Activated B cell treated with CpG ODN at 0.5 μM for 24 hours (primary cell): ENCODE measurements at regions of chr15 and their contacts with region 1.

Region 1: GRCh38 chr15:72473614-72474465 is at the start of gene ARIH1:
- DNase-seq: peak; percentile 98
- ATAC-seq: peak; percentile 72
- H3K4me3 Mint-ChIP-seq: peak within 1 kb of the TSS; percentile 97
- H3K27ac Mint-ChIP-seq: peak within 1 kb of the TSS; percentile 99
- H3K4me1 Mint-ChIP-seq: peaks cover 39% of the 10 kb centered on the region
- H3K27me3 Mint-ChIP-seq: no peaks in the 10 kb centered on the region
- CTCF ChIP-seq: no peak
- total RNA-seq, gene ARIH1: 142 and 159 TPM in 2 replicates

Region 2: GRCh38 chr15:72199711-72200212 is 274.1 kb before region 1 on chr15:
- CTCF ChIA-PET with region 1: no interaction called
- POLR2A ChIA-PET with region 1: no interaction called
- intact Hi-C with region 1: loop called (anchors 10 kb)
- DNase-seq: peak; percentile 60
- ATAC-seq: peak; percentile 72
- H3K4me3 Mint-ChIP-seq: no peak overlapping the region
- H3K27ac Mint-ChIP-seq: no peak overlapping the region
- H3K4me1 Mint-ChIP-seq: peaks cover 27% of the 10 kb centered on the region
- H3K27me3 Mint-ChIP-seq: peaks cover 18% of the 10 kb centered on the region
- CTCF ChIP-seq: peak; percentile 56

Region 3: DNA sequence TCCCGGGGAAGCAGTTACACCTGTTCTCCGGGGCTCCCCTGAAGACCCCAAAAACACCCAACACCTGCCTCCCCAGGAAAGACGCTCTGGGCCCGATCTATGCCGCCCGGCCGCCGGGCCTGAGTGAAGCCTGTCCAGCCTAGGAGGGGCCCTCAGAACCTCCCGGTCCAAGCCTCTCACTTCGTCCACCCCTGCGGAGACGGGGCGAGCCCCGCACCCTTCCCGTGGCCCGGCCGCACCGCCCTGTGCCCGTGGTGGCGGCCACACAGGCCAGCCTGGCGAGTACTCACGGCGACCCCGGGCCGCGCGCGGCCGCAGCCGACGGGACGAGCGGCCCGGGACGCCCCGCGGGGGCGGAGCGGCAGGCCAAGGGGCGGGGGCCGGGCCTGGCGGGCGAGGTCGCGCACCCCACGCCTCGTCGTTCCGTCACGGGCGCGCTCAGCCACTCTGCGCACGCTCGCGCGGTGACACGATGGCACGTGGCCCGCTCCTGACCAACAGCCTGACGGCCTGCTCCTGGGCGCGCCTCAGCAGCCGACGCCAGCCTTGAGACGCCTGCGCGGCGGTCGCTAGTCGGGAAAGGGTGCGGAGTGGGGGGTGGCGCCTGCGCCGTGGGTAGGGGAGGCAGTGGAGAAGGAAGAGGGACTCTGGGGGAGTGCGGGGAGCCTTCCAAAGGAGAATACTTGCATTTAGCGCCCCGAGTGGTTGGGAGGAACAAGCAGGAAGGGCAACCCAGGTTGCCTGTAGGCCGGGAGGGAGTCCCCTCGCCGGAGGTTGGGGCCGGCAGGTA is 201.4 kb before region 1 on chr15 and contains the start of gene PARP6:
- CTCF ChIA-PET with region 1: no interaction called
- POLR2A ChIA-PET with region 1: no interaction called
- intact Hi-C with region 1: loop called (anchors 1 kb)
- DNase-seq: peak; percentile 95
- ATAC-seq: peak; percentile 96
- H3K4me3 Mint-ChIP-seq: peak within 1 kb of the TSS; percentile 87
- H3K27ac Mint-ChIP-seq: peak within 1 kb of the TSS; percentile 86
- H3K4me1 Mint-ChIP-seq: peaks cover 36% of the 10 kb centered on the region
- H3K27me3 Mint-ChIP-seq: no peaks in the 10 kb centered on the region
- CTCF ChIP-seq: no peak
- total RNA-seq, gene PARP6: 70.7 and 81.4 TPM in 2 replicates

Region 4: GRCh38 chr15:72319985-72320671 is 153.7 kb before region 1 on chr15 and contains the start of gene CELF6:
- CTCF ChIA-PET with region 1: no interaction called
- POLR2A ChIA-PET with region 1: no interaction called
- intact Hi-C with region 1: loop called (anchors 1 kb)
- DNase-seq: peak; percentile 77
- ATAC-seq: peak; percentile 81
- H3K4me3 Mint-ChIP-seq: peak within 1 kb of the TSS; percentile 86
- H3K27ac Mint-ChIP-seq: peak within 1 kb of the TSS; percentile 47
- H3K4me1 Mint-ChIP-seq: peaks cover 18% of the 10 kb centered on the region
- H3K27me3 Mint-ChIP-seq: no peaks in the 10 kb centered on the region
- CTCF ChIP-seq: no peak
- total RNA-seq, gene CELF6: 2.0 and 2.2 TPM in 2 replicates

Region 5: DNA sequence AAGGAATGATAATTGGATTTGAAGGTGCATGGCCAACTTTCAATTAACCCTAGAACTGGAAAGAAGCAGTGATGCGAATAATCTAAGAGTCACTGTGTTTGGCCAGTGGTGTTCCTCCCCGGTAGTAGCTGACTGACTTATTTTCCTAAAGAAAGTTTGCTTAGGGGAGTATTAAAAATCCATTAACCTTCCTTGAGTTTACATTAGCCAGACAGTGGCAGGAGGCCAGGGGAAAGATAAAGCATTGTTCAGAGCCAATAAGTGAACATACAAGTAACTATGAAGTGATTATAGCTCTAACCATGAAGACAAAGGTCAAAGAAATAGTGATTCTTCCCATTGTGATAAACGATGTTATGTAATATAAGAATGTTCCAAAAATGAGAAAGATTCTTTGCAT is 84.6 kb before region 1 on chr15:
- CTCF ChIA-PET with region 1: no interaction called
- POLR2A ChIA-PET with region 1: interaction called, 13 read pairs
- intact Hi-C with region 1: no loop called
- DNase-seq: no peak
- ATAC-seq: no peak
- H3K4me3 Mint-ChIP-seq: no peak overlapping the region
- H3K27ac Mint-ChIP-seq: no peak overlapping the region
- H3K4me1 Mint-ChIP-seq: no peaks in the 10 kb centered on the region
- H3K27me3 Mint-ChIP-seq: peaks cover 29% of the 10 kb centered on the region
- CTCF ChIP-seq: no peak

Region 6: GRCh38 chr15:72426753-72427152 is 47.1 kb before region 1 on chr15:
- CTCF ChIA-PET with region 1: no interaction called
- POLR2A ChIA-PET with region 1: no interaction called
- intact Hi-C with region 1: no loop called
- DNase-seq: no peak
- ATAC-seq: no peak
- H3K4me3 Mint-ChIP-seq: no peak overlapping the region
- H3K27ac Mint-ChIP-seq: no peak overlapping the region
- H3K4me1 Mint-ChIP-seq: no peaks in the 10 kb centered on the region
- H3K27me3 Mint-ChIP-seq: no peaks in the 10 kb centered on the region
- CTCF ChIP-seq: no peak

Region 7: GRCh38 chr15:72685925-72686794 is 212.3 kb after region 1 on chr15 and contains the starts of genes BBS4 and HIGD2B:
- CTCF ChIA-PET with region 1: no interaction called
- POLR2A ChIA-PET with region 1: interaction called, 5 read pairs
- intact Hi-C with region 1: loop called (anchors 5 kb)
- DNase-seq: peak; percentile 83
- ATAC-seq: peak; percentile 93
- H3K4me3 Mint-ChIP-seq: peak within 1 kb of the TSS; percentile 97
- H3K27ac Mint-ChIP-seq: peak within 1 kb of the TSS; percentile 93
- H3K4me1 Mint-ChIP-seq: peaks cover 20% of the 10 kb centered on the region
- H3K27me3 Mint-ChIP-seq: no peaks in the 10 kb centered on the region
- CTCF ChIP-seq: no peak
- total RNA-seq, gene BBS4: 19.4 and 21.4 TPM in 2 replicates
- total RNA-seq, gene HIGD2B: 0.20 and 0.55 TPM in 2 replicates